ENCODE measurements at regions of chr19 and their contacts with region 1.

Region 1: DNA sequence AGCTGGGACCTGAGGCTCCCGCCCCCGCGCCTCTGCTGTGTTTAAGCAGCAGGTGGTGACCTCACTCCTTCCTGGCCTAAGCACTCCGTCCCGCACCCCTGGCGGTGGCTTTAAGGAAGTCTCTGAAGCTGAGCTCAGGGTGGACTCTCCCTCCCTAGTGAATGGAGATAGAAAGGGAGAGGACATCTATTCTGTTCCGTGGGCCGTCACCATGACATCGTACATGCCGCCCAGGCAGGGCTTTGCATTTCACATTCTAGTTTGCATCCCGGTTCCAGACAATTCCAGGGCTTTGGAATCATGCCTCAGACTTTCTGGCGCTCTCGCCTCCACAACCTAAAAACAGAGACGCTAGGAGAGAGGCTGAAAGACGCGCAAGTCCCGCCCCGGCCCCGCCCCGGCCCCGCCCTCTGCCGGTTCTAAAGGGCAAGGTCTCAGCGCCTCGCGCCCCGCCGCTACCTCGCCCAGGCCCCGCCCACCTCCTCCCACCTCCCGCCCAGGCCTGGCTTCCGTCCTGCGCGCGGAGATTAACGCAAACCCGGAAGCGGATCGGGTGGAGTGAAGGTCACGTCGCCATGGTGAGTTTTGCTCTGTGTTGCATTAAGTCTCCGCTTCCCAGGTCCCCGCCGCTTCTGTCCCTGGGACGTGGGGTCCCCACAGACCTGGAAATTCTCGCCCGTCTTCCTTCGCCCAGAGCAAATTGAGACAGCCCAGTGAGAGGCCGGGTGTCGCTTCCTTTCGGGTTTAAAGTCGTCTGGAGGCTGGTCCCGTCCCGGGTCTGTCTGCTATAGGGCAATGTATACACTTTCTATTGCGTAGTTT is at the start of gene ZNF808:
- DNase-seq: peak; percentile 87
- H3K4me3 Mint-ChIP-seq: peak within 1 kb of the TSS; percentile 99
- H3K27ac Mint-ChIP-seq: peak within 1 kb of the TSS; percentile 98
- H3K4me1 Mint-ChIP-seq: peaks cover 12% of the 10 kb centered on the region
- H3K27me3 Mint-ChIP-seq: no peaks in the 10 kb centered on the region
- total RNA-seq, gene ZNF808: 19.1 and 20.0 TPM in 2 replicates

Region 2: GRCh38 chr19:52189735-52190486 is 337.4 kb before region 1 on chr19 and contains the start of gene PPP2R1A:
- intact Hi-C with region 1: loop called (anchors 2 kb)
- DNase-seq: peak; percentile 97
- H3K4me3 Mint-ChIP-seq: peak within 1 kb of the TSS; percentile 98
- H3K27ac Mint-ChIP-seq: peak within 1 kb of the TSS; percentile 99
- H3K4me1 Mint-ChIP-seq: peaks cover 45% of the 10 kb centered on the region
- H3K27me3 Mint-ChIP-seq: no peaks in the 10 kb centered on the region
- total RNA-seq, gene PPP2R1A: 214 and 215 TPM in 2 replicates

Region 3: GRCh38 chr19:52397310-52398080 is 129.8 kb before region 1 on chr19 and contains the start of gene ZNF528:
- intact Hi-C with region 1: loop called (anchors 1 kb)
- DNase-seq: peak; percentile 85
- H3K4me3 Mint-ChIP-seq: peak within 1 kb of the TSS; percentile 86
- H3K27ac Mint-ChIP-seq: peak within 1 kb of the TSS; percentile 77
- H3K4me1 Mint-ChIP-seq: peaks cover 17% of the 10 kb centered on the region
- H3K27me3 Mint-ChIP-seq: peaks cover 1% of the 10 kb centered on the region
- total RNA-seq, gene ZNF528: 6.8 and 8.0 TPM in 2 replicates

Region 4: DNA sequence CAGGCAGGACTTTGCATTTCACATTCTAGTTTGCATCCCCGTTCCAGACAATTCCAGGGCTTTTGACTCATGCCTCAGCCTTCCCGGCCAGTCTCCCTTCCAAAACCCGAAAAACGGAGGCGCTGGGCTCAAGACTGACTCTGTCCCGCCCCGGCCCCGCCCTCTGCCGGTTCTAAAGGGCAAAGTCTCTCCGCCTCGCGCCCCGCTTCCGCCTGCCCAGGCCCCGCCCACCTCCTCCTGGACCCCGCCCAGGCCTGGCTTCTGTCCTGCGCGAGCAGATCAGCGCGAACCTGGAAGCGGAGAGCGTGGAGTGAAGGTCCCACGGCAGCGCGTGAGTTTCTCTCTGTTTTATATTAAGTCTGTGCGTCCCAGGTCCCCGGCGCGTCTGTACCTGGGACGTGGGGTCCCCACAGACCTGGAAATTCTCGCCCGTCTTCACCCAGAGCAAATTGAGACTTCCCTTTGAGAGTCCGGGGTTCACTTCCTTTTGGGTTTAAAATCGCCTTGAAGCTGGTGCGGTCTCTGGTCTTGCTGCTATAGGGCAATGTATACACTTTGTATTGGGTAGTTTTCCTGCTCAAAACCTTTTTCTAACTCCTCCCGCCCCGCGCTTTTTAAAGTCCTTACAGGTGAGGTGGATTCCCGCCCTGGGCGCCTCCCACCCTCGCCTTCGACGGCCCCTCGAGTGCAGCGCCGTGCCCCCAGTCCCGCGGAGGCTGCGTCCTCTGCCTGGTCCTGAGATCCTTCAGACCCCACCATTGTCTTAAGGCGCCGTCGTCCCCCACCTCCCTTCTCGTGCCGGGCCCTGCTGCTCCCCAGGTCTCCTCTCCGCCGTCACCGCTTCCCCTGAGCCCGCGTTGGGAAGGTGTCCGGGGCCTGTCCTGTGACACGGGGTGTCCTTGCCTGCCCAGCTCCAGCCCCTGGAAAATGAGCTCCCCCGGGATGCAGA is 74.0 kb after region 1 on chr19:
- intact Hi-C with region 1: loop called (anchors 1 kb)
- DNase-seq: peak; percentile 89
- H3K4me3 Mint-ChIP-seq: peak overlapping the region; percentile 89
- H3K27ac Mint-ChIP-seq: peak overlapping the region; percentile 64
- H3K4me1 Mint-ChIP-seq: peaks cover 12% of the 10 kb centered on the region
- H3K27me3 Mint-ChIP-seq: no peaks in the 10 kb centered on the region

Region 5: DNA sequence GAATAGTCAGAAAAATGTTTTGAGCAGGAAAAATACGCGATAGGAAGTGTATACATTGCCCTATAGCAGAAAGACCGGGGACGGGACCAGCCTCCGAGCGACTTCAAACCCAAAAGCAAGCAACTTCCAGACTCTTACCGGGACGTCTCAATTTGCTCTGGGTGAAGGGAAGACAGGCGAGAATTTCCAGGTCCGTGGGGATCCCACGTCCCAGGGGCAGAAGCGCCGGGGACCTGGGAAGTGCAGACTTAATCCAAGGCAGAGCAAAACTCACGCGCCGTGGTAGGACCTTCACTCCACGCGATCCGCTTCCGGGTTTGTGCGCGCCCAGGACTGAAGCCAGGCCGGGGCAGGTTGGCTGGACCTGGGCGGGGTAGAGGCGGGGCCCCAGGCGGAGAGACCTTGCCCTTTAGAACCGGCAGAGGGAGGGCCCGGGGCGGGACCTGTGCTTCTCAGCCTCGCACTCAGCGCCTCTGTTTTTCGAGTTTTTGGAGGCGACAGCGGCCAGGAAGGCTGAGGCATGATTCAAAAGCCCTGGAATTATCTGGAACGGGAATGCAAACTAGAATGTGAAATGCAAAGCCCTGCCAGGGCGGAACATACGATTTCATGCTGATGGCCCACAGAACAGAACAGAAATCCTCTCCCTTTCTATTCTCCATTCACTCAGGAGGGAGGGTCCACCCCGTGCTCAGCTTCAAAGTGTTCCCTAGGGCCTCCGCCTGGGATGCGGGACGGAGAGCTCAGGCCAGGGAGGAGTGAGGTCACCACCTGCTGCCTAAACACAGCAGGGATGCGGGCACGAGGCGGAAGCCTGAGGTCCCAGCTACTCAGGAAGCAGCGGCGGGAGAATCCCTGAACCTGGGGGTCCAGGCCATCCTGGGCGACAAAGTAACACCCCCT is 259.4 kb after region 1 on chr19 and contains the start of gene ZNF600:
- intact Hi-C with region 1: no loop called
- DNase-seq: peak; percentile 52
- H3K4me3 Mint-ChIP-seq: peak within 1 kb of the TSS; percentile 90
- H3K27ac Mint-ChIP-seq: peak within 1 kb of the TSS; percentile 75
- H3K4me1 Mint-ChIP-seq: peaks cover 26% of the 10 kb centered on the region
- H3K27me3 Mint-ChIP-seq: no peaks in the 10 kb centered on the region
- total RNA-seq, gene ZNF600: 11.9 and 13.4 TPM in 2 replicates

Region 6: DNA sequence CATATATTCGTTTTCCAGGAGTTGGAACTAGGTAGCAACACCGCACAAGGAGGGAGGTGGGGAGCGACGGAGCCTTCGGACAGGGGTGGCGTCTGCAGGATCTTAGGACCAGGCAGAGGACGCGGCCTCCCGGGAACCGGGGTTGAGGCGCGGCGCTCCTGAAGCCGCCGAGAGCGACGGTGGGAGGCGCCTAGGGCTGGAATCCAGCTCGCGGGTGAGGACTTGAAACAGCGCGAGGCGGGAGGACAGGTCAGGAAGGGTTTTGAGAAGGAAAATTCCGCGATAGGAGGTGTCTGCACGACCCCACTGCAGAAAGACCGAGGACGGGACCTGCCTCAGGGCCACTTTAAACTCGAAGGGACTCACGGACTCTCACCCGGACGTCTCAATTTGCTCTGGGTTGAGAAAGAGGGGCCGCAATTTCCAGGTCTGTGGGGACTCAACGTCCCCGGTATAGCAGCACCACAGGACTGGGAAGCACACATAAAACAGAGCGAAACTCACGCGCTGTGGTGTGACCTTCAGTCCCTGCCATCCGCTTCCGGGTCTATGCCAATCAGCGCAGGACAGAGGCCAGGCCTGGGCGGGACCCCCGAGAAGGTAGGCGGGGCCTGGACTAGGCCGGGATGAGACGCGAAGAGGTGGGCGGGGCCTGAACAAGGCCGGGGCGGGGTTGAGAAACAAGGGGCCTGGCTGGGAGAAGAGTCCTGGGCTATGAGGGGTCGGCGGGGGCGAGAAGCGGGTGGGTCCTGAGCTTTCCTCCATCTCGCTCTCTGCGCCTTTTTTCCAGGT is 370.0 kb after region 1 on chr19 and contains the start of gene ZNF320:
- intact Hi-C with region 1: loop called (anchors 2 kb)
- DNase-seq: peak; percentile 90
- H3K4me3 Mint-ChIP-seq: peak within 1 kb of the TSS; percentile 92
- H3K27ac Mint-ChIP-seq: peak within 1 kb of the TSS; percentile 87
- H3K4me1 Mint-ChIP-seq: peaks cover 4% of the 10 kb centered on the region
- H3K27me3 Mint-ChIP-seq: no peaks in the 10 kb centered on the region
- total RNA-seq, gene ZNF320: 10.5 and 11.0 TPM in 2 replicates

Region 7: DNA sequence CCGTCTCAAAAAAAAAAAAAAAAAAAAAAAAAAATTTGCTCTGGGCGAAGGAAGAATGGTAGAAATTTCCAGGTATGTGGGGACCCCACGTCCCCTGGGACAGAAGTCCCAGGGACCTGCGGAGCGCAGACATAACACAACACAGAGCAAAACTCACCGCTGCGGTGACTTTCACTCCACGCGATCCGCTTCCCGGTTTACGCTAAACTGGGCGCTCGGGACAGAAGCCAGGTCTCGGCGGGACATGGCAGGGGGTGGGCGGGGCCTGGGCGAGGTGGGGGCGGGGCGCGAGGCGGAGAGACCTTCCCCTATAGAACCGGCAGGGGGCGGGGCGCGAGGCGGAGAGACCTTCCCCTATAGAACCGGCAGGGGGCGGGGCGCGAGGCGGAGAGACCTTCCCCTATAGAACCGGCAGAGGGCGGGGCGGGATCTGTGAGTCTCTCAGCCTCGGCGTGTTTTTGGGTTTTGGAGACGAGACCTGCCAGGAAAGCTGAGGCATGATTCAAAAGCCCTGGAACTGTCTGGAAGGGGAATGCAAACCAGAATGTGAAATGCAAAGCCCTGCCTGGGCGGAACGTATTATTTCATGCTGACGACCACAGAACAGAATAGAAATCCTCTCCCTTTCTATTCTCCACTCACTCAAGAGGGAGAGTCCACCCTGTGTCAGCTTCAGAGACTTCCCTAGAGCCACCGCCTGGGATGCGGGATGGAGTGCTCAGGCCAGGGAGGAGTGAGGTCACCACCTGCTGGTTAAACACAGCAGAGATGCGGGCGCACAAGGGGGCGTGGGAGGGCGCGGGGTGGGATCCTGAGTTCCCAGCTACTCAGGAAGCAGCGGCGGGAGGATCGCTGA is 466.2 kb after region 1 on chr19:
- intact Hi-C with region 1: loop called (anchors 1 kb)
- DNase-seq: peak; percentile 79
- H3K4me3 Mint-ChIP-seq: peak overlapping the region; percentile 82
- H3K27ac Mint-ChIP-seq: no peak overlapping the region
- H3K4me1 Mint-ChIP-seq: peaks cover 6% of the 10 kb centered on the region
- H3K27me3 Mint-ChIP-seq: peaks cover 4% of the 10 kb centered on the region

Region 8: DNA sequence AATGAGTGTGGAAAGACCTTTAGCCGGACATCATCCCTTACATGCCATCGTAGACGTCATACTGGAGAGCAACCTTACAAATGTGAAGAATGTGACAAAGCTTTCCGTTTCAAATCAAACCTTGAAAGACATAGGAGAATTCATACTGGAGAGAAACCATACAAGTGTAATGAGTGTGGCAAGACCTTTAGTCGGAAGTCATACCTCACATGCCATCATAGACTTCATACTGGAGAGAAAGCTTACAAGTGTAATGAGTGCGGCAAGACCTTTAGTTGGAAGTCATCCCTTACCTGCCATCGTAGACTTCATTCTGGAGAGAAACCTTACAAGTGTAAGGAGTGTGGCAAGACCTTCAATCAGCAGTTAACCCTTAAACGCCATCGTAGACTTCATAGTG is 928.5 kb after region 1 on chr19:
- intact Hi-C with region 1: no loop called
- DNase-seq: no peak
- H3K4me3 Mint-ChIP-seq: no peak overlapping the region
- H3K27ac Mint-ChIP-seq: no peak overlapping the region
- H3K4me1 Mint-ChIP-seq: no peaks in the 10 kb centered on the region
- H3K27me3 Mint-ChIP-seq: no peaks in the 10 kb centered on the region